ENCODE measurements at regions of chr20 and their contacts with region 1.

Region 1: GRCh38 chr20:8722276-8722928 is 346.5 kb upstream of the PLCB4 start:
- DNase-seq: peak; percentile 88
- ATAC-seq: peak; percentile 95
- H3K4me3 ChIP-seq: no peak overlapping the region
- H3K27ac ChIP-seq: no peak overlapping the region
- H3K4me1 ChIP-seq: no peaks in the 10 kb centered on the region
- H3K27me3 ChIP-seq: peaks cover 18% of the 10 kb centered on the region; the same call in 1 of the 2 replicates
- CTCF ChIP-seq: peak; percentile 93

Region 2: DNA sequence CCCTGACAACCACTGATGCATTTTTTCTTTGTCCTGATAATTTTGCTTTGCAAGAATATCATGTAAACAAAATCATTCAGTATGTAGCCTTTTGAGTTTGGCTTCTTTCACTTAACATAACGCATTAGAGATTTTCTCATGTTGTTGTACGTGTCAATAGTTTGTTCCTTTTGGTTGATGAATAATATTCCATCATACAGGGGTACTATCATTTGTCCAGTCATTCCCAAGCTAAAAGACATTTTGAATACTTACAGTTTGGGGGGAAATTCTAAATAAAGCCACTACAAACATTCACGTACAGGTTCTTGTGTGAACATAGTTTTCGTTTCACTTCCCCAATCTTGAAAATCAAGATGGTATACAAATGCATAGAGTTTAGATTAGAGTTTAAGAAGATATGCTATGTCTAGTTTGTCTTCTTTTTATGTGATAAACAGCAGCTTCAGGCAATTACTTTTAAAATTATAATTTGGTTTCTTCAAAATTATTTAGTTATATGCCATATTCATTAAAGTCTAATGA is 787.3 kb before region 1 on chr20:
- CTCF ChIA-PET with region 1: interaction called, 46 read pairs
- POLR2A ChIA-PET with region 1: no interaction called
- intact Hi-C with region 1: loop called (anchors 1 kb)
- DNase-seq: no peak
- ATAC-seq: no peak
- H3K4me3 ChIP-seq: no peak overlapping the region
- H3K27ac ChIP-seq: no peak overlapping the region
- H3K4me1 ChIP-seq: peaks cover 7% of the 10 kb centered on the region
- H3K27me3 ChIP-seq: peaks cover 3% of the 10 kb centered on the region; the same call in 1 of the 2 replicates
- CTCF ChIP-seq: no peak

Region 3: DNA sequence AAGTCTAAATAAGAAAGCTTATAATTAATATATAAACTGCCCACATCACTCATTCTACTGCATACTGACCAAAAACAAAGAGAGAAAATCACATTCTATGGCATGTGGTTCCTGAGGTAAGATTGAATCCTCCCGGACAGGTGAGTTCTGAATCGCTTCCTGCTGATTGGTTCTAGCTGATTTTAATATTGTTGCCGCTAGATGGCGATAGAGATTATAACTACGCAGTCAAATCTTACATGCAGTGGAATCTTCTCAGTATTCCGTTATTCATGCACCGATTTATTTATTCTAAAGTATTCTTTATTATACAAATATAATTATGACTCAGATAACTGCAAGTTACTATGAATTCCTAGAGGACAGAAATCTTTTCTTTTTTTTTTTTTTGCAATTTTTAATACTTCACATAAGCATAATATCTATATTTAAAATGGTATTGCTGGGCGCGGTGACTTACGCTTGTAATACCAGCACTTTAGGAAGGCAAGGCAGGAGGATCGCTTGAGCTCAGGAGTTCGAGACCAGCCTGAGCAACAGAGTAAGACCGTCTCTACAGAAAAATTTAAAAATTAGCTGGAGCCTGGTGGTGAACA is 678.6 kb before region 1 on chr20:
- CTCF ChIA-PET with region 1: interaction called, 8 read pairs
- POLR2A ChIA-PET with region 1: no interaction called
- intact Hi-C with region 1: loop called (anchors 1 kb)
- DNase-seq: peak; percentile 88
- ATAC-seq: peak; percentile 81
- H3K4me3 ChIP-seq: no peak overlapping the region
- H3K27ac ChIP-seq: no peak overlapping the region
- H3K4me1 ChIP-seq: peaks cover 11% of the 10 kb centered on the region; the same call in 1 of the 2 replicates
- H3K27me3 ChIP-seq: peaks cover 35% of the 10 kb centered on the region
- CTCF ChIP-seq: peak; percentile 80

Region 4: DNA sequence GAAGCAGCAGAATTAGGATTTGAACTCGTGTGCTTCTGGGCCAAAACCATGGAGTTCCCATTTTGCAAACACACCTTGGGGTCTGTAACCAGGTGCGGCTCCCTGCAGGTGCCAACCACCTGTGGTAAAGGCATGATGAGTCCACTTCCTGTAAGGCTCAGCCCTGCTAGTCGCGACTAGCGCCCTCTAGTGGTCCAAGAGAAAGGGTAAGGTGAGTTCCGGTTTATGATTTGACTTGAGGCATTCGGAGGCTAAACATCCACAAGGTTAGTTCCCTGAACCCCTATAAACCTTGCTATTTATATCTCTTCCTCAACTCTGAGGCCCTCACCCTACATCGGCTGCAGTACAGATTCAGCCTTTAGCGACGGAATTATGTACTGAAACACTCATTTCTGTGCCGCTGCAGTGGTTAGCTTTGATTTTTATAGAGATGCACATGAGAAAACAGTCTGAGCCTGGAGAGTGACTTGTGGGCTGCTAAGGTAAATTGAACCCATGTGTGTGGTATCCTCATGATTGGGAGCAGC is 416.9 kb before region 1 on chr20:
- CTCF ChIA-PET with region 1: no interaction called
- POLR2A ChIA-PET with region 1: no interaction called
- intact Hi-C with region 1: loop called (anchors 5 kb)
- DNase-seq: peak; percentile 81
- ATAC-seq: peak; percentile 61; the same call in 1 of the 2 replicates
- H3K4me3 ChIP-seq: no peak overlapping the region
- H3K27ac ChIP-seq: no peak overlapping the region
- H3K4me1 ChIP-seq: no peaks in the 10 kb centered on the region
- H3K27me3 ChIP-seq: peaks cover 47% of the 10 kb centered on the region; the same call in 1 of the 2 replicates
- CTCF ChIP-seq: peak; percentile 92

Region 5: GRCh38 chr20:8527998-8528723 is 194.2 kb before region 1 on chr20:
- CTCF ChIA-PET with region 1: no interaction called
- POLR2A ChIA-PET with region 1: no interaction called
- intact Hi-C with region 1: loop called (anchors 10 kb)
- DNase-seq: peak; percentile 44
- ATAC-seq: peak; percentile 20; the same call in 1 of the 2 replicates
- H3K4me3 ChIP-seq: no peak overlapping the region
- H3K27ac ChIP-seq: no peak overlapping the region
- H3K4me1 ChIP-seq: no peaks in the 10 kb centered on the region
- H3K27me3 ChIP-seq: peaks cover 32% of the 10 kb centered on the region; the same call in 1 of the 2 replicates
- CTCF ChIP-seq: no peak